ENCODE measurements at regions of chr1 and their contacts with region 1.

Region 1: DNA sequence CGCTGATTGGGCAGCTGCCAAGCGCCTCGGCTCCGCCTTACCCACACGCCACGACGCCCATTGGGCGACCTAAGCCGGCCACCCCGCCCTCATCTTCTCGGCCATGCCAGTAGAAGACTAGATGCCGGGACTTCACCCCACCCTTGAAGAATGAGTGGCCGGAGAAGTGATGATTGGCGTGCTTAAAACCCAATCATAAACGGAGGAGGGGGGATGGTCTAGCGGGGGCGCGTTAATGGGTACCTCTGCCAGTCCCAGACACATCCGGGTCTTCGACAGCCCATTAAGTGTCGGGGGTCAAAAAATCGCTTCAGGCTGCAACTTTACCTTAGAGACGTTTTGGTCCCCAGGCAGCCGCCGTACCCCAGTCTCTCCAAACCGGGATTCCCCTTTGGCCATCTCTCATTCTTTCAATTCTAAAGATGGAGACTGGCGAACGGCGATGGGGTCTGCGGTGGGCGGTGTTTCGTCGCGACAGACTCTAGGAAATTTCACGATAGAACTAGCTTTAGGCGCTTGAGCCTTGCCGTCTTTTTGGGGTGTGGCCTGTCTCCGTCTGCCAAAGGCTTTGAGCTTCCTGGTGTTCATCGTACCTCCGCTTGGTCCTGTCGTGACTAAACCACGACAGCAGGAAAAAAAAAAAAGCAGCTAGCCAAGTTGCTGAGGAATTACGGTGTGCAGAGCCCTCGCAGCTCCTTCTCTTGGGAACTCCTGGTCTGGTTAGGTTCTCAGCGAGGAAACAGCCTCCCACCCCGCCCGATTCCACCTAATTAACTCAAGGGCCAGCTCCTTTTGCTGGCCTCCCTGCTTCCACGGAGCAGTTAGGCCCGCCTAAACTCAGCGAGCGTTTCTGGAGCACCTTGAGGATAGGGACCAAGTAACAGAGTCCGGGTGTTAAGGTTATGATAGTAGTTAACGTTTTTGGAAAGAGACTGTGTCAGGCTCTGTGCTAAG is at the start of gene GATAD2B:
- DNase-seq: peak; percentile 100
- ATAC-seq: peak; percentile 98
- H3K4me3 ChIP-seq: peak within 1 kb of the TSS; percentile 92 to 99
- H3K27ac ChIP-seq: peak within 1 kb of the TSS; percentile 98
- H3K4me1 ChIP-seq: peaks cover 19% of the 10 kb centered on the region
- H3K27me3 ChIP-seq: no peaks in the 10 kb centered on the region
- CTCF ChIP-seq: no peak
- total RNA-seq, gene GATAD2B: 47.2 TPM

Region 2: DNA sequence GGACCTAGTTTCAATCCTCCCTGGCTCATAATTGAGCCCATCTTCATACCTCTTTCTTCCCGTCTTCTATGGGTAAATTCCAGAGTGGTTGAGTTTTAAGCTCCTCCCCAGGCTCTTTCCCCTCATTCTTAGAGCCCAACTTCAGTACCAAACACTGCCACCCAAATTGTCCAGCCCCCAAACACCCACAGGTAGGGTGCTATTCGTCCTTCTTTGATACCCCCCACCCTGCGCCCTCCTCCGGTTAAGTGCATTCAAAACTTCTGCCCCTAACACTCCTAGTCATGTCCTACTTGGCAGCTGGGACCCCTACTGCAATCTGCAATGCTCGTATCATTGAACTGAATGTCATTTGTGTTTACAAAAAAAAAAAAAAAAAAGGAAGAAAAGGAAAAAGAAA is 113.9 kb before region 1 on chr1:
- CTCF ChIA-PET with region 1: no interaction called
- POLR2A ChIA-PET with region 1: interaction called, 21 read pairs
- in situ Hi-C with region 1: no loop called
- intact Hi-C with region 1: no loop called
- DNase-seq: no peak
- ATAC-seq: no peak
- H3K4me3 ChIP-seq: no peak overlapping the region
- H3K27ac ChIP-seq: no peak overlapping the region
- H3K4me1 ChIP-seq: no peaks in the 10 kb centered on the region
- H3K27me3 ChIP-seq: no peaks in the 10 kb centered on the region
- CTCF ChIP-seq: no peak

Region 3: DNA sequence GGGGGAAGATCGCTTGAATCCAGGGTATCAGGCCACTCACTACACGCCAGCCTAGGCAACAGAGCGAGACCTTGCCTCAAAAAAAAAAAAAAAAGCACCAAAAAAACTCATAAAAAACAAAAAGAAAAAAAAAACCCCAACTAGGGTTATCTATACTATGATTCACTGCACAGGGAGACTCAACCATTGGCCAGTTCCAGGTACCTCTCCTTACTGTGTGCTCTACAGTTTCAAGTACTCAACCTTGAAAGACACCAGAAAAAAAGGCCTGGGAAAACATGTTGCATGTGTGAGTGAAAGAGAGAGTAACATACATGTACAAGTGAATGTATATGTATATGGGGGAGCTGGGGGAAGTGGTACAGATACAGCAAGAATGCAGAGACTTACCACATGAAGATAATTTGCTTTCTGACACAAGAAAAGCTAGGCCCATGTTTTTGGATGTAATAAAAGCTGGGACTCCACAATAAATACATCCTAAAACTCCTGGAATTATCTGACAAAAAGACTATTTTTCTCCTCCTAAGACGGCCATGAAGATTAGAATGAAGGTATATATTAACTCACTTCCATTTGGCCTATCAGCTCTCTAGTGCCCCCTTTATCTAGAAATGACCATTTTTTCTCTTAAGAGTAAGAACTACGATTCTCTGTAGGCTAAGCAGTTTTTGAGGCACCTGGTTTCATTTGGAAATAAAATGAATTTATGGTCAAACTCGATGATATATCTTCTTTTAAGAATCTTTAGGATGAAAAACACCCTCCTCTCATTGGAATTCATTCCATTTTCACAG is 95.9 kb before region 1 on chr1:
- CTCF ChIA-PET with region 1: no interaction called
- POLR2A ChIA-PET with region 1: no interaction called
- in situ Hi-C with region 1: no loop called
- intact Hi-C with region 1: loop called (anchors 5 kb)
- DNase-seq: no peak
- ATAC-seq: no peak; the same call in 1 of the 2 replicates
- H3K4me3 ChIP-seq: no peak overlapping the region
- H3K27ac ChIP-seq: no peak overlapping the region
- H3K4me1 ChIP-seq: no peaks in the 10 kb centered on the region
- H3K27me3 ChIP-seq: no peaks in the 10 kb centered on the region
- CTCF ChIP-seq: no peak

Region 4: GRCh38 chr1:153990468-153991150 is 67.4 kb after region 1 on chr1 and contains the start of gene RPS27:
- CTCF ChIA-PET with region 1: interaction called, 11 read pairs
- POLR2A ChIA-PET with region 1: interaction called, 7 read pairs
- in situ Hi-C with region 1: no loop called
- intact Hi-C with region 1: no loop called
- DNase-seq: peak; percentile 95
- ATAC-seq: peak; percentile 80
- H3K4me3 ChIP-seq: peak within 1 kb of the TSS; percentile 87 to 92
- H3K27ac ChIP-seq: peak within 1 kb of the TSS; percentile 97
- H3K4me1 ChIP-seq: peaks cover 13% of the 10 kb centered on the region
- H3K27me3 ChIP-seq: no peaks in the 10 kb centered on the region
- CTCF ChIP-seq: no peak
- total RNA-seq, gene RPS27: 1,095 TPM

Region 5: GRCh38 chr1:154104433-154105082 is 181.3 kb after region 1 on chr1:
- CTCF ChIA-PET with region 1: no interaction called
- POLR2A ChIA-PET with region 1: no interaction called
- in situ Hi-C with region 1: no loop called
- intact Hi-C with region 1: no loop called
- DNase-seq: no peak
- ATAC-seq: peak; percentile 68
- H3K4me3 ChIP-seq: no peak overlapping the region
- H3K27ac ChIP-seq: no peak overlapping the region
- H3K4me1 ChIP-seq: no peaks in the 10 kb centered on the region
- H3K27me3 ChIP-seq: no peaks in the 10 kb centered on the region
- CTCF ChIP-seq: no peak

Region 6: GRCh38 chr1:154151311-154151710 is 228.1 kb after region 1 on chr1:
- CTCF ChIA-PET with region 1: no interaction called
- POLR2A ChIA-PET with region 1: interaction called, 10 read pairs
- in situ Hi-C with region 1: no loop called
- intact Hi-C with region 1: no loop called
- DNase-seq: no peak
- ATAC-seq: no peak
- H3K4me3 ChIP-seq: no peak overlapping the region
- H3K27ac ChIP-seq: no peak overlapping the region
- H3K4me1 ChIP-seq: peaks cover 3% of the 10 kb centered on the region; the same call in 1 of the 2 replicates
- H3K27me3 ChIP-seq: no peaks in the 10 kb centered on the region
- CTCF ChIP-seq: no peak

Measured in Panc1 (cell line).